Caco-2 (cell line): ENCODE measurements at regions of chr17 and their contacts with region 1.

Region 1: DNA sequence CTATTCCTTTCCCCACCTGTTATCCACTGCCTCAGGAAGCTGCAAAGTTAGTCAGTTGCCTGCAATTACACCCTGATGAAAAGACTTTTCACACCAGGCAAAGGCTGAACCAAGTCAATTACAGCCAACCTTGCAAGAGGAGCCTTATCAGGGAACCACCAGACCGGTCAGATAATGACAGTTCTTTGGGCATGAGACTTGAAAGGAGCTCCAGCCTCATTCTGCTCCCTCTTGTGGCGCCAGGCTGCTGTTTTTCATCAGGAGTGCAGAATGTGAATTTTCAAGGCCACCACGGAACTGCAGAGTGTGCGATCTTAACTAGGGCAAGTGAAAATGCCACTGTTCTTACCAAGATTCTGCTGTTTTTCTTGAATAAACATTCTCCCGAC is 22.5 kb downstream of the DNAI2 start:
- DNase-seq: peak; percentile 81
- H3K4me3 ChIP-seq: no peak overlapping the region
- H3K4me3 Mint-ChIP-seq: no peak overlapping the region
- H3K27ac Mint-ChIP-seq: no peak overlapping the region
- H3K4me1 ChIP-seq: 0 out of 2 replicates have a peak, but pooled peaks cover 5% of the 10 kb centered on the region
- H3K4me1 Mint-ChIP-seq: peaks cover 8% of the 10 kb centered on the region
- H3K27me3 ChIP-seq: no peaks in the 10 kb centered on the region
- H3K27me3 Mint-ChIP-seq: peaks cover 3% of the 10 kb centered on the region
- CTCF ChIP-seq: peak; percentile 63 to 82

Region 2: GRCh38 chr17:74203439-74204240 is 92.9 kb before region 1 on chr17 and contains the start of gene RPL38:
- CTCF ChIA-PET with region 1: no interaction called
- POLR2A ChIA-PET with region 1: no interaction called
- intact Hi-C with region 1: loop called (anchors 2 kb)
- DNase-seq: peak; percentile 96
- H3K4me3 ChIP-seq: peak within 1 kb of the TSS; percentile 99
- H3K4me3 Mint-ChIP-seq: peak within 1 kb of the TSS; percentile 100
- H3K27ac Mint-ChIP-seq: peak within 1 kb of the TSS; percentile 100
- H3K4me1 ChIP-seq: peaks cover 16% of the 10 kb centered on the region
- H3K4me1 Mint-ChIP-seq: peaks cover 21% of the 10 kb centered on the region
- H3K27me3 ChIP-seq: peaks cover 1% of the 10 kb centered on the region; the same call in 1 of the 2 replicates
- H3K27me3 Mint-ChIP-seq: peaks cover 16% of the 10 kb centered on the region
- CTCF ChIP-seq: peak; percentile 97
- total RNA-seq, gene RPL38: 1,319 and 1,408 TPM in 2 replicates

Region 3: GRCh38 chr17:74212913-74213791 is 83.4 kb before region 1 on chr17 and contains the start of gene TTYH2:
- CTCF ChIA-PET with region 1: interaction called, 5 read pairs
- POLR2A ChIA-PET with region 1: interaction called, 3 read pairs
- intact Hi-C with region 1: loop called (anchors 2 kb)
- DNase-seq: peak; percentile 86 to 88
- H3K4me3 ChIP-seq: peak within 1 kb of the TSS; percentile 67
- H3K4me3 Mint-ChIP-seq: peak within 1 kb of the TSS; percentile 76
- H3K27ac Mint-ChIP-seq: peak within 1 kb of the TSS; percentile 83
- H3K4me1 ChIP-seq: peaks cover 21% of the 10 kb centered on the region
- H3K4me1 Mint-ChIP-seq: peaks cover 26% of the 10 kb centered on the region
- H3K27me3 ChIP-seq: no peaks in the 10 kb centered on the region
- H3K27me3 Mint-ChIP-seq: no peaks in the 10 kb centered on the region
- CTCF ChIP-seq: no peak
- total RNA-seq, gene TTYH2: 4.6 and 5.4 TPM in 2 replicates

Region 4: GRCh38 chr17:74280093-74280513 is 16.4 kb before region 1 on chr17:
- CTCF ChIA-PET with region 1: interaction called, 15 read pairs
- POLR2A ChIA-PET with region 1: no interaction called
- intact Hi-C with region 1: no loop called
- DNase-seq: no peak
- H3K4me3 ChIP-seq: no peak overlapping the region
- H3K4me3 Mint-ChIP-seq: no peak overlapping the region
- H3K27ac Mint-ChIP-seq: no peak overlapping the region
- H3K4me1 ChIP-seq: no peaks in the 10 kb centered on the region
- H3K4me1 Mint-ChIP-seq: no peaks in the 10 kb centered on the region
- H3K27me3 ChIP-seq: no peaks in the 10 kb centered on the region
- H3K27me3 Mint-ChIP-seq: peaks cover 3% of the 10 kb centered on the region
- CTCF ChIP-seq: no peak

Region 5: GRCh38 chr17:74361230-74362068 is 64.9 kb after region 1 on chr17 and contains the start of gene BTBD17:
- CTCF ChIA-PET with region 1: interaction called, 11 read pairs
- POLR2A ChIA-PET with region 1: no interaction called
- intact Hi-C with region 1: loop called (anchors 1 kb)
- DNase-seq: peak in 1 of 2 experiments; percentile 79
- H3K4me3 ChIP-seq: no peak within 1 kb of the TSS
- H3K4me3 Mint-ChIP-seq: no peak within 1 kb of the TSS
- H3K27ac Mint-ChIP-seq: no peak within 1 kb of the TSS
- H3K4me1 ChIP-seq: no peaks in the 10 kb centered on the region
- H3K4me1 Mint-ChIP-seq: no peaks in the 10 kb centered on the region
- H3K27me3 ChIP-seq: no peaks in the 10 kb centered on the region; the same call in 1 of the 2 replicates
- H3K27me3 Mint-ChIP-seq: peaks cover 6% of the 10 kb centered on the region
- CTCF ChIP-seq: peak; percentile 77 to 78
- total RNA-seq, gene BTBD17: not detected in 2 replicates

Region 6: DNA sequence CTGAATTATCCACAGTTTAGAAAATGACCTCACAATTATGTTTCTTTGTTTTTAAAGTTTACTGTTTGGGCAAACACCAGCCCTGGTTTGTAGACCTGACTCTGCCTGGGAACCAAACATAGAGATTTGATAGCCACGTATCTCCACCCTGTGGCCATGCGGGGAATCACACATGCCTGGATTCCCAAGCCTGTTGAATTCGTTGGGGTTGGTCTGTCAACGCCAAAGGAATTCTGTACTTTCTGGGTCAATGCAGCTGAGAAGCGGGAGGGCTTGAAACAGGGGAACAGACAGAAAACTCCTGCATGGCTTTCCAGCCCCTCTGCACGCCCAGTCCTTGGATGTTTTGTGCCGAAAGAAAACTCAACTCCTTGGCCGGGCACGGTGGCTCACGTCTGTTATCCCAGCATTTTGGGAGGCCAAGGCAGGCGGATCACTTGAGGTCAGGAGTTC is 196.9 kb after region 1 on chr17:
- CTCF ChIA-PET with region 1: interaction called, 3 read pairs
- POLR2A ChIA-PET with region 1: no interaction called
- intact Hi-C with region 1: loop called (anchors 1 kb)
- DNase-seq: peak; percentile 72 to 84
- H3K4me3 ChIP-seq: no peak overlapping the region
- H3K4me3 Mint-ChIP-seq: no peak overlapping the region
- H3K27ac Mint-ChIP-seq: no peak overlapping the region
- H3K4me1 ChIP-seq: no peaks in the 10 kb centered on the region
- H3K4me1 Mint-ChIP-seq: no peaks in the 10 kb centered on the region
- H3K27me3 ChIP-seq: no peaks in the 10 kb centered on the region
- H3K27me3 Mint-ChIP-seq: peaks cover 10% of the 10 kb centered on the region
- CTCF ChIP-seq: peak; percentile 89 to 93